Activated naive CD4-positive, alpha-beta T cell treated with anti-CD3 and anti-CD28 coated beads for 36 hours (primary cell): ENCODE measurements at regions of chr12 and their contacts with region 1.

Region 1: GRCh38 chr12:49763006-49763591 is 21.7 kb downstream of the TMBIM6 start:
- DNase-seq: peak; percentile 91
- H3K4me3 Mint-ChIP-seq: no peak overlapping the region
- H3K27ac Mint-ChIP-seq: peak overlapping the region; percentile 76
- H3K4me1 Mint-ChIP-seq: peaks cover 61% of the 10 kb centered on the region
- H3K27me3 Mint-ChIP-seq: no peaks in the 10 kb centered on the region

Region 2: GRCh38 chr12:49636979-49637755 is 125.9 kb before region 1 on chr12:
- CTCF ChIA-PET with region 1: interaction called, 6 read pairs
- intact Hi-C with region 1: loop called (anchors 5 kb)
- DNase-seq: peak; percentile 80
- H3K4me3 Mint-ChIP-seq: no peak overlapping the region
- H3K27ac Mint-ChIP-seq: no peak overlapping the region
- H3K4me1 Mint-ChIP-seq: peaks cover 14% of the 10 kb centered on the region
- H3K27me3 Mint-ChIP-seq: no peaks in the 10 kb centered on the region

Region 3: DNA sequence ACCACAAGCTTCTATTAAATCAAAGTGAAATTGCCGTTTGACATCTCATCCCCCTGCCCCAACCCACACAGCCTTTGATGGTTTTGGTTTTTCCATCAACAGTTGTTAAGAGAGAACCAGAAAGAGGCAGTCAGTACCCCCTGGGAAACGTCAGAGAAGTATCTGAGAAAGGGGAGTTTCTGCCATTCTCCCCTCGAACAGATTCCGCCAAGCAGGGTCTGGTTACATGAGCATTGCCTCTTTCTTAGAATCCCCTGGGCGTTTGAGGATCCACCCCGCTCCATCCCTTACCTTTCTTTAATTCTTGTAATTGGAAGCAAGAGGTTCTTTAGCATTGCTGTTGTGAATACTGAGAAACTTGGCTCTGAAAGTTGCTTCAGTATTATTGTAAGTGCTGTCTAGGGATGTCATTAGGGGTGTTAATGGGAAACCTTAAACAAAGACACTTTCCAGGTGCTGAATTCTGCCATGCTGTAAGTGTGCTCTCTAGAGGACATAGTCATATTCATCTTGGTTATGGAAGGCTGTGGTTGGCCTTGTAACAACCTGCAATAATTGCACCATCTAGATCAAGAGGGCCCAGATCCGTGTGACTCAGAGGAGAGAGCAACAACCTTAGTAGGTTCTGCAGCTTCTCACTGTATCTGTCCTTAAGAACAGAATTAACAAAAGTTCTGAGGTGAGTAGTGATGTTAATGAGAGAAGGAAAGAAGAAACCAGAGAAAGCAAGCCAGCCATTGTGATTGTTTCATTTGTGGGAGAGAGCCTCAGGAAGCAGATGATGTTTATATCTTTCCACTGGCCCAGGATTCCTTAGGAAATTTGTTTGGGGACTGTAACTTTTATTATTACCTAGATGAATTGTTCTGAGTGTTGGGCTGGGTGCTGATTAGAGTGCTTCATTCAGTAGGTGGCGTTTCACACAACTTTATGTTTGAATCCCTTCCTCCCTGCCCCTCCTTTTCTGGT is 12.8 kb before region 1 on chr12:
- CTCF ChIA-PET with region 1: interaction called, 30 read pairs
- intact Hi-C with region 1: loop called (anchors 1 kb)
- DNase-seq: peak; percentile 87
- H3K4me3 Mint-ChIP-seq: peak overlapping the region; percentile 40
- H3K27ac Mint-ChIP-seq: peak overlapping the region; percentile 94
- H3K4me1 Mint-ChIP-seq: peaks cover 83% of the 10 kb centered on the region
- H3K27me3 Mint-ChIP-seq: no peaks in the 10 kb centered on the region